ENCODE measurements at regions of chr5 and their contacts with region 1.

Region 1: GRCh38 chr5:160021831-160022446 is 13.0 kb downstream of the TTC1 start:
- DNase-seq: peak in 1 of 2 donors; percentile 65
- ATAC-seq: peak; percentile 56 to 91 (median 84)
- H3K4me3 ChIP-seq: no peak overlapping the region
- H3K27ac ChIP-seq: peak overlapping the region in 1 of 10 donors; percentile 2
- H3K4me1 ChIP-seq: peaks cover 0 to 28% (median 6%) of the 10 kb centered on the region in 9 donors
- H3K27me3 ChIP-seq: no peaks in the 10 kb centered on the region
- CTCF ChIP-seq: peak; percentile 69 to 89 (median 84)

Region 2: DNA sequence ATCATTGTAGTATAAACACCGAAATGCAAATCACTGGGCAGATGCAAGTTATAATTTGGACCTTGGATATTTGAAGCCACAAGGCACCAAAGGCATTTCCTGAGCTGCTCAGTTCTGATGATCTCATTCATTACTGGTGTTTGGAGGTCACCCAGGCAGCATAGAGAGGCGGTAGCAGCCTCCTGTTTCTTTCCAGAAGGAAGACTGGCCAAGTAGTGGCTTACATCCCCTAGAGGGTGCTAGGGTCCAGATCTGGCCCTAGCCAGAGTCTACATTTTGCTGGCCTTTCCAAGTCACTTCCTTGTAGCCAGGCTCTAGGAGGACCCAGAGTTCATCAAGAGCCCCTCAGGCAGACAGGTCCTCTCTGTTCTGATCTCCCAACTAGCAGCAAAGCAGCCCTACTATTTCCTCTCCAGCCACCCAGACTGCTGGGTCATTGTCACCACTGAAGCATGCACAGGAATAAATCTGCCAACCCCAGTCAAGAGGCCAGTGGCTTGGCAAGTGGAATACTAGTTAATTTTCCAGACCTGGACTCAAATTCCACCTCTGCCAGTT is 46.4 kb before region 1 on chr5:
- intact Hi-C with region 1: no loop called
- DNase-seq: peak in 1 of 2 donors; percentile 27
- ATAC-seq: peak; percentile 75 to 91 (median 80)
- H3K4me3 ChIP-seq: no peak overlapping the region
- H3K27ac ChIP-seq: peak overlapping the region in 3 of 10 donors; percentile 9 to 48 (median 40)
- H3K4me1 ChIP-seq: peaks cover 0 to 13% (median 9%) of the 10 kb centered on the region in 9 donors
- H3K27me3 ChIP-seq: peaks cover 0 to 42% (median 25%) of the 10 kb centered on the region in 7 donors
- CTCF ChIP-seq: peak in 5 of 9 donors; percentile 21 to 37 (median 32)

Region 3: DNA sequence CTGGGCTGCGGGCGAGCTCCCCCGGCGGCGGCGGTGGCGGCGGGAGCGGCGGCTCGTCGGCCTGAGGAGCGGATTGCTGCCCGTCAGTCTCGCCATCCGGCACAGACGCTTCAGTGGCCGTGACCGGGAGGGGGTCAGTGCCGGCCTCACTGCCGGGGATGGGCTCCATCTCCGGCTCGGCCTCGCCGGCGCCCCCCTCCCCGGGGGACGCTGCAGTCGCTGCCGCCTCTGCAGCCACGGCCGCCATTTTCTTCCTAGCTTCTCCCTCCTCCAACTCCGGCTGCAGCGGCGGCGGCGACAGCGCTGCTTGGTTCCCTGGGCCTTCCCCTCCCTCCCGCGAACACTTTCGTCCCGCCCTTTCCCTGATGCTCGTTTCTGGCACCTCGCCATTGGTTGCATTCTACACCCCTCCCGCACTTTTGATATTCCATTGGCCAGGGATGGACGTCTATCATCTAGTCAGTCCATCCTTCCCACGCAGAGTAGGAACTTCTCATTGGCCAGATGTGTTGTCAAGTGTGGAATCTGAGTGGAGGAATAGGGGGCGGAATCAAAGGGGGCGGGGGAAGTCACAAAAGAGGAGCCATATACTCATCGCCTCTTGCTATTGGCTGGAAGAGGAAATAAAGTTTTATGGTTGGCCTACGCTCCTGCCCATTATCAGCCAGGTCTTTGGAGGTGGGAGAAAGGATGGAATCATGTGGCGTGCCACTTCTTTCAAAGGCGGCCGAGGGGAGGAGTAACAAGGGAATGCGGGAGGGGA is 97.4 kb after region 1 on chr5 and contains the start of gene PWWP2A:
- intact Hi-C with region 1: loop called in 4 of 10 experiments (anchors 2 to 10 kb)
- DNase-seq: peak; percentile 97 to 100
- ATAC-seq: peak; percentile 96 to 99 (median 98)
- H3K4me3 ChIP-seq: peak within 1 kb of the TSS; percentile 65 to 100 (median 97)
- H3K27ac ChIP-seq: peak within 1 kb of the TSS; percentile 85 to 99 (median 98)
- H3K4me1 ChIP-seq: peaks cover 0 to 23% (median 15%) of the 10 kb centered on the region in 9 donors
- H3K27me3 ChIP-seq: no peaks in the 10 kb centered on the region
- CTCF ChIP-seq: peak in 4 of 9 donors; percentile 35 to 45 (median 38)
- total RNA-seq, gene PWWP2A: 8.2 to 14.7 (median 12.4) TPM

Region 4: DNA sequence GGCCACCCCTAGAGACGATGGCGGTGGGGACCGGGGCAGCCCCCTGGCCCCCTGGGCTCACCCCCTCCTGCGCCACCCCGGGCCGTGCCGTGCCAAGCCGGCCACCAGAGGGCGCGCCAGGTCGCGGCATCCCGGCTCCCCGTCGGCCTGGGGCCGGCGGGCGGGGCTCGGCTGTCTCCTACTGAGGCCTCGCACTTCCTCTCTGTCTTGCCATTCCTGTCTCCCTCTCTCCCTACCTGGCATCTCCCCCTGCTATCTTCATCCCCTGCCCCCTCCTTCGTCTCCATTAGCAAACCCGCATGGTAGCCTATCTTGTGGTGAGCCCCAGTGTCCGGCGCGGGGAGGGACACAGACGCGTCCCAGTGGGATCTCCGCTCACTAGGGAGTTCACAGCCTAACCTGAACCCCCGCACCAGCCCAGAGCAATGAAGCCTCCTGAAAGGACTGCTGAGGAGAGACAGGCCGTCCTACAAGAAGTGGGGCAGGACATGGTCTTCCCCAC is 177.5 kb after region 1 on chr5:
- intact Hi-C with region 1: loop called in 7 of 10 experiments (anchors 1 to 10 kb)
- DNase-seq: peak; percentile 44 to 83
- ATAC-seq: peak; percentile 91 to 97 (median 95)
- H3K4me3 ChIP-seq: peak overlapping the region; percentile 14 to 59 (median 44)
- H3K27ac ChIP-seq: peak overlapping the region in 1 of 10 donors; percentile 20
- H3K4me1 ChIP-seq: peaks cover 0 to 28% (median 18%) of the 10 kb centered on the region in 9 donors
- H3K27me3 ChIP-seq: no peaks in the 10 kb centered on the region
- CTCF ChIP-seq: peak; percentile 90 to 99 (median 96)

Region 5: DNA sequence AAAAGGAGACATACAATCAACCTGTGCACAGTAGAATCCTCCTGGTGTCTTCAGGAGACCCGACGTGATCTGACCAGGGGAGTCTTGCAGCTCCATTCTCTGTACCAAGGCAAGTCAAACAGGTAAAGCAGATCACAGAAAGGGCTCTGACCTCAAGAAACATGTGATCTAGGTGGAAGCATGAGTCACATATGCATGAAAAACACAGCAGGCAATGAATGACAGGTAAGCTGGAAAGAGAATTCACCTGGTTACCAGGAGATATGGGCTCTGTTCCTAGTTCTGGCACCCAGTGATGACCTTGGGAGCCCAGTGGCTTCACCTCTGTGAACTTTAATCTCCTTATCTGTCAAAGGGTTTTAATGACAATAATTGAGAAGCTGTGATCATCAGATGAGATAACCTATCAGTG is 188.0 kb after region 1 on chr5:
- intact Hi-C with region 1: loop called in 1 of 10 experiments (anchors 10 kb)
- DNase-seq: no peak
- ATAC-seq: no peak
- H3K4me3 ChIP-seq: no peak overlapping the region
- H3K27ac ChIP-seq: no peak overlapping the region
- H3K4me1 ChIP-seq: peaks cover 0 to 5% (median 0%) of the 10 kb centered on the region in 9 donors
- H3K27me3 ChIP-seq: no peaks in the 10 kb centered on the region
- CTCF ChIP-seq: no peak

Region 6: DNA sequence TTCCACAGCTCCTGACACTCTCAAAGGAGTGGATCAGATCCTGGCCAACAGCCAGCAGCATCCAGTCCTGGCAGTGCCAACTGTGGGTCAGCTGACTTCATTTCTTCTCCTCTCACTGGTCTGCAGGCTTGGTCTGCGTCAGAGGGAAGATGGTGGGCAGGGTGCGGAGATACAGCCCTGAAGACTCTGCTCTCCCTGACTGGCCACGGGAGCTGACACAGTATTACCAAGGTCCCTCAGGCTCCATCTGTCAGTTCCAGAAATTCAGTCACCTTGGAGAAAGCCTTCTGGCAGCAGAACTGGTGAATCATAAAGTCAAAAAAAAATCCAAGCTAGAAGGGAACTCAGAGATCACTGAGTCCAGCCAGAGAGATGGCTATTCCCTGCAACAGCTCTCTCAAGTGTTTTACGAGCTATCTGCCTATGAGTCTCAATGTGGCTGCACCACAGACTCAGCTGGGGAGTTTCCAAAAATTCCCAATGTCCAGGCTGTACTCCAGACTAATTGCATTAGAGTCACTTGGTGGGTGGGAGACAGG is 320.5 kb after region 1 on chr5:
- intact Hi-C with region 1: loop called in 9 of 10 experiments (anchors 1 to 10 kb)
- DNase-seq: no peak
- ATAC-seq: peak in 2 of 8 donors; percentile 52 to 56
- H3K4me3 ChIP-seq: no peak overlapping the region
- H3K27ac ChIP-seq: no peak overlapping the region
- H3K4me1 ChIP-seq: peaks cover 0 to 20% (median 0%) of the 10 kb centered on the region in 9 donors
- H3K27me3 ChIP-seq: no peaks in the 10 kb centered on the region
- CTCF ChIP-seq: no peak

Region 7: DNA sequence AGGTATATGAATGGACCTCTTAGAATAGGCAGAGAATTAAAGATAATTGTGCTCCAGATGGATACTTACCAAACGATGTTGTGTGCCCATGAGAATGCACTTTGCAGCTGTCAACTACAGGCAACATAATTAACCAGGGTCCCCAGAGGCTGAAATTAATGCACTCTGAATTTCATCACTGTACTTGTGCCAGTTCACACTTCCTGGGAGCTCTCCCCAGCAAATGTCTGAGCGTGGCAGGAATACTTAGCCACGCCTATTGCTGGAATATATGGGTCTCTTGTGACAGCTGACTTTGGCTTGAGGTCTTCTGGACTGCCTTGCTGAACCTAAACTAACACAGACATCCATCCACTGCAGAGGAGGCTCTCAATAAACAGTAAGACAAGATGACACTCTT is 360.4 kb after region 1 on chr5:
- intact Hi-C with region 1: loop called in 1 of 10 experiments (anchors 5 kb)
- DNase-seq: no peak
- ATAC-seq: no peak
- H3K4me3 ChIP-seq: no peak overlapping the region
- H3K27ac ChIP-seq: no peak overlapping the region
- H3K4me1 ChIP-seq: peaks cover 0 to 5% (median 0%) of the 10 kb centered on the region in 9 donors
- H3K27me3 ChIP-seq: no peaks in the 10 kb centered on the region
- CTCF ChIP-seq: no peak

Region 8: GRCh38 chr5:160390787-160391696 is 369.1 kb after region 1 on chr5:
- intact Hi-C with region 1: loop called in 6 of 10 experiments (anchors 5 kb)
- DNase-seq: no peak
- ATAC-seq: no peak
- H3K4me3 ChIP-seq: no peak overlapping the region
- H3K27ac ChIP-seq: no peak overlapping the region
- H3K4me1 ChIP-seq: peaks cover 0 to 29% (median 3%) of the 10 kb centered on the region in 9 donors
- H3K27me3 ChIP-seq: no peaks in the 10 kb centered on the region
- CTCF ChIP-seq: peak in 7 of 9 donors; percentile 46 to 70 (median 57)

Measured in heart right ventricle (tissue), 16 donors.